CD4-positive, alpha-beta T cell (primary cell): ENCODE measurements at regions of chr14 and their contacts with region 1.

Region 1: DNA sequence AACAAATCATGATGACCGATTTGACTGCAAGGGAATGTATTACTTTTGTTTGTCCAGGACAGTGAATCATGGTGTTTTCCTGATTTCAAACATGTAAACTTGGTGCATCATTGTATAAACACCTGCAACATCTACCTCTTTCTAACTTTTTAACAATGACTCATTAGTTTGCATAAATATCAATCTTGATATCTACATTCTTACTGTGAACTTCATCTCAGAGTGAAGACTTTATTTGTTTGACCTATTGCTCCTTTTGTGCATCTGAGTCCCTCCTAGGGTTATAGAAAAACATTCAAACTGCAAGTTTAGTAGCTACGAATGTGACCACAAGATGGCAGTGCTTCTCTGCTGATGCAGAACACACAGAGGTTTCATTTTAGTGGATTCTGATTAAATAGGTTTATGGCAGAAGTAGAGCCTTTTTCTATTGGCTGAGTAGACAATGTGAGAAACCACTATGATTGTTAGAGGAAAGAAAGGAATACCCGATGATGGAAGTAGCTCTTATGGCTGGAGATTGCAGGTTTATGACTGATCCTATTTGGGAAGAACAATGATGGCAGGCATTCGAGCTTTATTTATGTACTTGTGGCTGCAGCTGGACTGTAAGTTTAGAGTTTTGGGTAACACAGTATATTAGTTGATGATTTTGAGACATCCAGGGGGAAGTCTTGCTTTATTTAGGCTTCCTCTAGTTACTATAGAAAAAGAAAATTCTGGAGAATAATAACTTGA is 244.2 kb upstream of the OR4E1 start:
- DNase-seq: peak; percentile 17 to 84 (median 49)
- ATAC-seq: peak; percentile 66
- H3K4me3 ChIP-seq: peak overlapping the region; percentile 40
- H3K4me3 Mint-ChIP-seq: peak overlapping the region; percentile 80
- H3K27ac ChIP-seq: no peak overlapping the region
- H3K27ac Mint-ChIP-seq: peak overlapping the region; percentile 73
- H3K4me1 ChIP-seq: peaks cover 12% of the 10 kb centered on the region
- H3K4me1 Mint-ChIP-seq: peaks cover 69% of the 10 kb centered on the region
- H3K27me3 ChIP-seq: no peaks in the 10 kb centered on the region
- H3K27me3 Mint-ChIP-seq: no peaks in the 10 kb centered on the region
- CTCF ChIP-seq: peak; percentile 78

Region 2: GRCh38 chr14:21796916-21797315 is 121.0 kb before region 1 on chr14:
- CTCF ChIA-PET with region 1: no interaction called
- POLR2A ChIA-PET with region 1: no interaction called
- intact Hi-C with region 1: no loop called
- DNase-seq: peak in 5 of 14 experiments; percentile 5 to 56 (median 41)
- ATAC-seq: peak; percentile 48
- H3K4me3 ChIP-seq: peak overlapping the region; percentile 27
- H3K4me3 Mint-ChIP-seq: peak overlapping the region; percentile 80
- H3K27ac ChIP-seq: no peak overlapping the region
- H3K27ac Mint-ChIP-seq: peak overlapping the region; percentile 74
- H3K4me1 ChIP-seq: no peaks in the 10 kb centered on the region
- H3K4me1 Mint-ChIP-seq: peaks cover 6% of the 10 kb centered on the region
- H3K27me3 ChIP-seq: no peaks in the 10 kb centered on the region
- H3K27me3 Mint-ChIP-seq: peaks cover 17% of the 10 kb centered on the region
- CTCF ChIP-seq: no peak

Region 3: GRCh38 chr14:21868442-21869046 is 49.3 kb before region 1 on chr14:
- CTCF ChIA-PET with region 1: interaction called, 3 read pairs
- POLR2A ChIA-PET with region 1: no interaction called
- intact Hi-C with region 1: loop called in 1 of 2 experiments (anchors 5 kb)
- DNase-seq: peak; percentile 64 to 86 (median 75)
- ATAC-seq: peak; percentile 92
- H3K4me3 ChIP-seq: peak overlapping the region; percentile 23
- H3K4me3 Mint-ChIP-seq: peak overlapping the region; percentile 71
- H3K27ac ChIP-seq: no peak overlapping the region
- H3K27ac Mint-ChIP-seq: peak overlapping the region; percentile 18
- H3K4me1 ChIP-seq: peaks cover 1% of the 10 kb centered on the region
- H3K4me1 Mint-ChIP-seq: peaks cover 36% of the 10 kb centered on the region
- H3K27me3 ChIP-seq: no peaks in the 10 kb centered on the region
- H3K27me3 Mint-ChIP-seq: no peaks in the 10 kb centered on the region
- CTCF ChIP-seq: peak; percentile 78

Region 4: DNA sequence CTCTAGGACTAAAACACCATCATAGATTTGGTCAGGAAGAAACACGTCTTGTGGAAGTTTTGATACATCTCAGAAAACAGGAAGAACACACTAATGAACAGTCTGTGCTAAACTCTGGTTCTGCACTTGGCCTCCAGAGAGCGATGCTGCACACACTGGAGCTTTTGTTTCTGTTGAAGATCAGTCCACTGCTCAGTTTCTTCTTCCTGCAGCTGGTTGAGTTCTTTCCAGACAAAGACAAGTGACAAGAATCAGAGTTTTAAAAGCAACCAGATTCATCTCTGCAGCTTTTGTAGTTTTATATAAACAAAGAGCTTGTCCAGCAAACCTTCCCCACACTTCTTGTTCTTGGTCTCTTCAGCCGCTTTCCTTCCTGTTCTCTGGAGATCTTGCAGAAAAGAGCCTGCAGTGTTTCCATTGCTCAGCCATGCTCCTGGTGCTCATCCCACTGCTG is 15.2 kb before region 1 on chr14:
- CTCF ChIA-PET with region 1: interaction called, 13 read pairs
- POLR2A ChIA-PET with region 1: interaction called, 3 read pairs
- intact Hi-C with region 1: no loop called
- DNase-seq: peak in 11 of 14 experiments; percentile 21 to 69 (median 35)
- ATAC-seq: peak; percentile 93
- H3K4me3 ChIP-seq: peak overlapping the region; percentile 26
- H3K4me3 Mint-ChIP-seq: peak overlapping the region; percentile 75
- H3K27ac ChIP-seq: no peak overlapping the region
- H3K27ac Mint-ChIP-seq: peak overlapping the region; percentile 77
- H3K4me1 ChIP-seq: peaks cover 9% of the 10 kb centered on the region
- H3K4me1 Mint-ChIP-seq: peaks cover 16% of the 10 kb centered on the region
- H3K27me3 ChIP-seq: no peaks in the 10 kb centered on the region
- H3K27me3 Mint-ChIP-seq: no peaks in the 10 kb centered on the region
- CTCF ChIP-seq: peak; percentile 62

Region 5: GRCh38 chr14:21933681-21934080 is 15.8 kb after region 1 on chr14:
- CTCF ChIA-PET with region 1: interaction called, 27 read pairs
- POLR2A ChIA-PET with region 1: interaction called, 4 read pairs
- intact Hi-C with region 1: loop called (anchors 1 kb)
- DNase-seq: peak in 3 of 14 experiments; percentile 52 to 57 (median 55)
- ATAC-seq: no peak
- H3K4me3 ChIP-seq: no peak overlapping the region
- H3K4me3 Mint-ChIP-seq: no peak overlapping the region
- H3K27ac ChIP-seq: no peak overlapping the region
- H3K27ac Mint-ChIP-seq: no peak overlapping the region
- H3K4me1 ChIP-seq: no peaks in the 10 kb centered on the region
- H3K4me1 Mint-ChIP-seq: peaks cover 12% of the 10 kb centered on the region
- H3K27me3 ChIP-seq: no peaks in the 10 kb centered on the region
- H3K27me3 Mint-ChIP-seq: no peaks in the 10 kb centered on the region
- CTCF ChIP-seq: peak; percentile 31

Region 6: DNA sequence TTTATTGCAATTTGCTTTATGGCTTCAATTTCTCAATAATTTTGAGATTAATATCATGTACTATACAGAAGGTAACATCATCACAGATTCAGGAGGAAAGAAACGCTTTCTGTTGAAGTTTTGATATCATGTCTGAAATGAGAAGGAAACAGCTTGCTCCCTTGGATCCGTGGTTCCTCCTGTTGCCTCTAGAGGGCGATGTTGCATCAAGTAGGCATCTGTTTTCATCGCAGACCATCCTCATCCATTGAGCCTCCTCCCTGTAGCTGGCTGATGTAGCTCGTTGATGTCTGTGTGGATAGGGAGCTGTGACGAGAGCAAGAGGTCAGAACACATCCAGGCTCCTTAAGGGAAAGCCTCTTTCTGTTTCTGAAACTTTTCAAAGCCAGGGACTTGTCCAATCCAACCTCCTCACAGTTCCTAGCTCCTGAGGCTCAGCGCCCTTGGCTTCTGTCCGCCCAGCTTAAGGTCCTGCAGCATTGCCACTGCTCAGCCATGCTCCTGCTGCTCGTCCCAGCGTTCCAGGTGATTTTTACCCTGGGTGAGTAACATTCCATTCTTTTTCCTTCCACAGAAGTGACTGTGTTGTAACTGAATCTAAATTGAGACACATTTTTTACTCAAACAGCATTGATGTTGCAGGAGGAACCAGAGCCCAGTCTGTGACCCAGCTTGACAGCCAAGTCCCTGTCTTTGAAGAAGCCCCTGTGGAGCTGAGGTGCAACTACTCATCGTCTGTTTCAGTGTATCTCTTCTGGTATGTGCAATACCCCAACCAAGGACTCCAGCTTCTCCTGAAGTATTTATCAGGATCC is 60.5 kb after region 1 on chr14:
- CTCF ChIA-PET with region 1: interaction called, 12 read pairs
- POLR2A ChIA-PET with region 1: interaction called, 7 read pairs
- intact Hi-C with region 1: loop called (anchors 1 to 5 kb)
- DNase-seq: peak; percentile 24 to 81 (median 52)
- ATAC-seq: peak; percentile 82
- H3K4me3 ChIP-seq: peak overlapping the region; percentile 40
- H3K4me3 Mint-ChIP-seq: peak overlapping the region; percentile 67
- H3K27ac ChIP-seq: no peak overlapping the region
- H3K27ac Mint-ChIP-seq: peak overlapping the region; percentile 77
- H3K4me1 ChIP-seq: peaks cover 4% of the 10 kb centered on the region
- H3K4me1 Mint-ChIP-seq: peaks cover 50% of the 10 kb centered on the region
- H3K27me3 ChIP-seq: no peaks in the 10 kb centered on the region
- H3K27me3 Mint-ChIP-seq: no peaks in the 10 kb centered on the region
- CTCF ChIP-seq: peak; percentile 75

Region 7: GRCh38 chr14:22039938-22040775 is 122.3 kb after region 1 on chr14:
- CTCF ChIA-PET with region 1: no interaction called
- POLR2A ChIA-PET with region 1: no interaction called
- intact Hi-C with region 1: loop called in 1 of 2 experiments (anchors 5 kb)
- DNase-seq: peak in 13 of 14 experiments; percentile 2 to 71 (median 38)
- ATAC-seq: peak; percentile 95
- H3K4me3 ChIP-seq: peak overlapping the region; percentile 38
- H3K4me3 Mint-ChIP-seq: peak overlapping the region; percentile 86
- H3K27ac ChIP-seq: peak overlapping the region in 1 of 2 donors; percentile 35
- H3K27ac Mint-ChIP-seq: peak overlapping the region; percentile 93
- H3K4me1 ChIP-seq: no peaks in the 10 kb centered on the region
- H3K4me1 Mint-ChIP-seq: peaks cover 22% of the 10 kb centered on the region
- H3K27me3 ChIP-seq: no peaks in the 10 kb centered on the region
- H3K27me3 Mint-ChIP-seq: no peaks in the 10 kb centered on the region
- CTCF ChIP-seq: peak; percentile 59

Region 8: GRCh38 chr14:22251090-22251489 is 333.2 kb after region 1 on chr14:
- CTCF ChIA-PET with region 1: no interaction called
- POLR2A ChIA-PET with region 1: no interaction called
- intact Hi-C with region 1: no loop called
- DNase-seq: no peak
- ATAC-seq: no peak
- H3K4me3 ChIP-seq: no peak overlapping the region
- H3K4me3 Mint-ChIP-seq: no peak overlapping the region
- H3K27ac ChIP-seq: no peak overlapping the region
- H3K27ac Mint-ChIP-seq: no peak overlapping the region
- H3K4me1 ChIP-seq: no peaks in the 10 kb centered on the region
- H3K4me1 Mint-ChIP-seq: no peaks in the 10 kb centered on the region
- H3K27me3 ChIP-seq: no peaks in the 10 kb centered on the region
- H3K27me3 Mint-ChIP-seq: no peaks in the 10 kb centered on the region
- CTCF ChIP-seq: no peak